ENCODE measurements at regions of chr1 and their contacts with region 1.

Region 1: GRCh38 chr1:31789259-31790065 is 25.3 kb upstream of the ADGRB2 start:
- DNase-seq: peak; percentile 98
- ATAC-seq: peak; percentile 91
- H3K4me3 Mint-ChIP-seq: peak overlapping the region; percentile 78
- H3K27ac Mint-ChIP-seq: no peak overlapping the region
- H3K4me1 Mint-ChIP-seq: peaks cover 5% of the 10 kb centered on the region
- H3K27me3 Mint-ChIP-seq: no peaks in the 10 kb centered on the region
- CTCF ChIP-seq: peak; percentile 65

Region 2: GRCh38 chr1:31644560-31645273 is 144.7 kb before region 1 on chr1 and contains the start of gene PEF1:
- CTCF ChIA-PET with region 1: interaction called, 20 read pairs
- POLR2A ChIA-PET with region 1: interaction called, 3 read pairs
- intact Hi-C with region 1: no loop called
- DNase-seq: peak; percentile 100
- ATAC-seq: peak; percentile 93
- H3K4me3 Mint-ChIP-seq: peak within 1 kb of the TSS; percentile 99
- H3K27ac Mint-ChIP-seq: peak within 1 kb of the TSS; percentile 100
- H3K4me1 Mint-ChIP-seq: peaks cover 16% of the 10 kb centered on the region
- H3K27me3 Mint-ChIP-seq: no peaks in the 10 kb centered on the region
- CTCF ChIP-seq: no peak
- total RNA-seq, gene PEF1: 58.1 to 61.9 TPM

Region 3: GRCh38 chr1:31669786-31670592 is 119.5 kb before region 1 on chr1:
- CTCF ChIA-PET with region 1: interaction called, 50 read pairs
- POLR2A ChIA-PET with region 1: interaction called, 10 read pairs
- intact Hi-C with region 1: no loop called
- DNase-seq: peak; percentile 40
- ATAC-seq: peak; percentile 81
- H3K4me3 Mint-ChIP-seq: peak overlapping the region; percentile 38
- H3K27ac Mint-ChIP-seq: no peak overlapping the region
- H3K4me1 Mint-ChIP-seq: peaks cover 10% of the 10 kb centered on the region
- H3K27me3 Mint-ChIP-seq: peaks cover 12% of the 10 kb centered on the region
- CTCF ChIP-seq: no peak

Region 4: GRCh38 chr1:31723828-31724359 is 65.6 kb before region 1 on chr1:
- CTCF ChIA-PET with region 1: no interaction called
- POLR2A ChIA-PET with region 1: no interaction called
- intact Hi-C with region 1: loop called (anchors 10 kb)
- DNase-seq: peak; percentile 67
- ATAC-seq: no peak
- H3K4me3 Mint-ChIP-seq: no peak overlapping the region
- H3K27ac Mint-ChIP-seq: no peak overlapping the region
- H3K4me1 Mint-ChIP-seq: no peaks in the 10 kb centered on the region
- H3K27me3 Mint-ChIP-seq: peaks cover 5% of the 10 kb centered on the region
- CTCF ChIP-seq: no peak

Region 5: DNA sequence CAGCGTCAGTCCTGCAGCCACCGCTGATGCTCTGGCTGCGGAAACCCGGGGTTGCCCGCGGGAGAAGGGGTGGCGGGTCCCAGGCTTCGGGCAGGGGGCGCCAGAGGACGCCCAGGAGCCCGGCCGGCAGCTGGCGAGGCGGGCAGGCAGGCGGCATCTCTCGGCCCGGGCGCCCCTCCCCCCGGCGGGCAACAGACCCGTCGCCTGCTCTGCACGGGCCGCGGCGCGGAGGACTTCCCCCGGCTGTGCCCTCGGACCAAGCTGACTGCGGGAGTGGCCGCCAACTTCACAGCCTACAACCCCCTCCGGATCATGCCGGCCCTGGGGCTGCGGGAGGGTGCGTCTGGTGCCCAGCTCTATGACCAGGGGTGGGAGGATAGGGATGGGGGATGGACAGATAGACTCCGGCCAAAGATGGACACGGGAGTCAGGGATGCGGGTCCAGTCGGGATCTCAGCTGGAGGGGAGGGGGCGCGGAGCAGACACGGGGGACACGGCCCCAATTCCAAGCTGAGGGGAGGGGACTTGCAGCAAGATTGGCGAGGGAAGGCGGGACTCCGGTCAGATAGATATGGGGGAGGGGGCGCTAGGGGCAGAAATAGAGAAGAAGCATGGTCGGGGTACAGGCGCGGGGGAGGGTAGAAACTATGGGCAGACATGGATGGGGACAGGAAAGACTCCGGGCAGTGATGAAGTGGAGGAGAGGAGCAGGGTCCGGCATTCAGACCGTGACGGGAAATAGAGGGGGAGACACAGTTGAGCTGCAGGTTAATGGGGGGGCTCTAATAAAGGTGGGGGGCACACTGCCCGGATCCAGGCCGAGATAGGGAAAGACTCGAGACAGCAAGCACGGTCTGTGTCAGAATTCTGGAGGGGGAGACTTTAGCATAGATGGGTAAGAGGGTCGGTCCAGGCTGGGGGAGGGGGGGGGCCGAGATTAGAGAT is 26.5 kb before region 1 on chr1:
- CTCF ChIA-PET with region 1: interaction called, 129 read pairs
- POLR2A ChIA-PET with region 1: interaction called, 3 read pairs
- intact Hi-C with region 1: loop called (anchors 2 kb)
- DNase-seq: peak; percentile 74
- ATAC-seq: peak; percentile 55
- H3K4me3 Mint-ChIP-seq: peak overlapping the region; percentile 64
- H3K27ac Mint-ChIP-seq: no peak overlapping the region
- H3K4me1 Mint-ChIP-seq: peaks cover 22% of the 10 kb centered on the region
- H3K27me3 Mint-ChIP-seq: peaks cover 27% of the 10 kb centered on the region
- CTCF ChIP-seq: peak; percentile 83

Measured in activated CD8-positive, alpha-beta T cell treated with anti-CD3 and anti-CD28 coated beads for 36 hours (primary cell).